BJ (cell line): ENCODE measurements at regions of chr3 and their contacts with region 1.

Region 1: GRCh38 chr3:184371570-184372018 is 6.4 kb downstream of the THPO start:
- DNase-seq: peak; percentile 36
- H3K4me3 ChIP-seq: no peak overlapping the region
- H3K27me3 ChIP-seq: no peaks in the 10 kb centered on the region; the same call in 1 of the 2 replicates
- CTCF ChIP-seq: peak; percentile 99

Region 2: DNA sequence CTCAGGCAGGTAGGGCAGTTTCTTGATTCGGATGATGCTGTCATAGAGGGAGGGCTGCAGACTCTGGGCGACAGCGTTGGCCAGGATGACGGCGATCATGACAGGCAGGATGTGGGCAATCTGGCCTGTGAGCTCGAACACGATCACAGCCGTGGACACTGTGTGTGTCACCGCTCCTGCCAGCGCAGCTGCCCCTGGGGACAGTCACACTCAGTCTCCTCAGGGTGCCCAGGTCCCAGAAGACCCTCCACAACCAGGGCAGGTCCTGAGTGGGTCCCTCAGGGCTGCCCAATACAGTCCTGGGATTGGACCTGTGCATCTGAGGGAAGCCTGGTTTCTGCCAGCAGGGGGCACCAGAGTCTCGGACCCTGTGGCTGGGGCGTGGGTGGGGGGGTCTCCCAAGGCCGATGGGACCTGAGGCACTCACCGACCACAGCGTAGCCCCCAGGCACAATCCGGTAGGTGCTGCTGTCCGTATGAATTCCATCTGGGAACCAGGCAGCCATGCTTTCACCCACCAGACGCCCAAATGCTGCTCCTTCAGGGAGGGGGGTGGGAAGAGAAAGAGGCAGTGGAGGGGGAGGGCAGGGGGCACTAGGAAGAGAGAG is 17.4 kb before region 1 on chr3:
- CTCF ChIA-PET with region 1: interaction called, 12 read pairs
- POLR2A ChIA-PET with region 1: no interaction called
- DNase-seq: no peak
- H3K4me3 ChIP-seq: no peak overlapping the region
- H3K27me3 ChIP-seq: no peaks in the 10 kb centered on the region
- CTCF ChIP-seq: peak; percentile 88

Region 3: DNA sequence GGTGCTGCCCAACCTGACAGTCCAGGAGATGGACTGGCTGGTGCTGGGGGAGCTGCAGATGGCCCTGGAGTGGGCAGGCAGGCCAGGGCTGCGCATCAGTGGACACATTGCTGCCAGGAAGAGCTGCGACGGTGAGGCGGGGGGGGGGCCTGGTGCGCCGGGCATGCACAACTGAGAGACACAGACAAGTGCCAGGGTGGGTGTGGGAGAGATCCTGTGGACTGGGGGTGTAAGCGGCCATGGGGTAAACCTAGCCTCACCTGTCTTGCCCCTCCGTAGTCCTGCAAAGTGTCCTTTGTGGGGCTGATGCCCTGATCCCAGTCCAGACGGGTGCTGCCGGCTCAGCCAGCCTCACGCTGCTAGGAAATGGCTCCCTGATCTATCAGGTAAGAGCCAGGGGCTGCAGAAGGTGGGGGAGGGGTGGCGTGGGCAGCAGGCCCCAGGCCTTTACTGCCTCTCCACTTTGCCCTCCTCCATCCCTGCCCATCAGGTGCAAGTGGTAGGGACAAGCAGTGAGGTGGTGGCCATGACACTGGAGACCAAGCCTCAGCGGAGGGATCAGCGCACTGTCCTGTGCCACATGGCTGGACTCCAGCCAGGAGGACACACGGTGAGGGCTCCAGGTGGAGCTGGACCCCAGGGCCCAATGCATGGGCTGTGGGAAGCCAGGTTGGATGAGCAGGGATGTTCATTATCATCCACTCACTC is 11.6 kb after region 1 on chr3:
- CTCF ChIA-PET with region 1: interaction called, 10 read pairs
- POLR2A ChIA-PET with region 1: interaction called, 5 read pairs
- DNase-seq: no peak
- H3K4me3 ChIP-seq: no peak overlapping the region
- H3K27me3 ChIP-seq: peaks cover 21% of the 10 kb centered on the region
- CTCF ChIP-seq: no peak

Region 4: GRCh38 chr3:184417619-184418327 is 46.2 kb after region 1 on chr3:
- CTCF ChIA-PET with region 1: interaction called, 17 read pairs
- POLR2A ChIA-PET with region 1: no interaction called
- DNase-seq: no peak
- H3K4me3 ChIP-seq: no peak overlapping the region
- H3K27me3 ChIP-seq: no peaks in the 10 kb centered on the region
- CTCF ChIP-seq: peak; percentile 95

Region 5: DNA sequence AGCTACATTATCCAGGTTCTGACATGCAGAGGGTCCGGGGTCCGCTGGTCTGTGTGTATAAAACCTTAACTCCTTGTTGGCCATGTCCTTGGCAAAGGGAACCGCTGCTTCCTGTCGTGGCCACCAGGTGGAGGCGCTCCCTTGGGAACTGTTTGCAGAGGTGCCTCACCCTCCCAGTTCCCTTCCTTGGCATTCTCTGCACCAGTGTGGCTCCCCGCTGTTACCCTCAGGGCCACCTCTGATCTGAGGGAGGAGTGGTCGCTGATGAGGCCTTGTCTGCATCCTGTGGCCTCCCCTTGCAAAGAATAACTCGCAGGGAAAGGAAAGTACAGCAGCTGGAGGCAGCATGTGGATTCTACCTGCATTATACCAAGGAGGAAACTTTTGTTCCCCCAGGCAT is 97.8 kb after region 1 on chr3:
- CTCF ChIA-PET with region 1: interaction called, 44 read pairs
- POLR2A ChIA-PET with region 1: no interaction called
- DNase-seq: no peak
- H3K4me3 ChIP-seq: no peak overlapping the region
- H3K27me3 ChIP-seq: peaks cover 2% of the 10 kb centered on the region; the same call in 1 of the 2 replicates
- CTCF ChIP-seq: peak; percentile 69

Region 6: DNA sequence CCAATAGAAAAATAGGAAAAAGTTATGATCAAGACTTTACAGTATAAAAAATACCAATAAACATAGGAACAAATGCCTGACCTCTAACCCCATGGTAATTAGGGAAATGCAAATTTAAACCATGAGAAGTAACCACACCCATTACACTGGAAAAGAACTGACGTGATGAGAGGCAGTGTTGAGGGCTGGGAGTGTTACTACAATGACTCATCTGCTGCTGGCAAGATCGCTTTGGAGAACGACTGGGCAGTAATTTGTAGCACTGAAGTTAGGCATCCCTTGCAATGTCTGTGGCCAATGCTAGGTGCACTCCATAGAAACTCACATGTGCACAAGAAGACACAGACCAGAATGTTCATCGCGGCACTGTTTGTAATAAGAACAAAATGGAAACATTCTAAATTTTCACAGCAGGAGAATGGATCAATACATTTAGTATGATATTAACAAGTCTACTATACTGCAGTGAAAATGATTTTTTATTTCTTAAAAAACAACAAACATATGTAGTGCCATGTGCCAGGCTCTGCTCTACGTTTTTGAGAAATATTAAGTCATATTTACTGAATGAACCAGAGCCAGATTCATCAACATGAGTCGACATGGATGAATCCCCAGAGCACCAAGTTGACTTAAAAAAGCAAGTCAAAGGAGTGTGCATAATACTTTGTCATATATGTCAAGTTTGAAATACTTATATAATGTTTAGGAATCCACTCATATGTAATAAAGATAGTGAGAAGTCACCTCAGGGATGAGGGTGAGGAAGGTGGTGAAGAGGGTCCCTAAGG is 152.4 kb after region 1 on chr3:
- CTCF ChIA-PET with region 1: interaction called, 14 read pairs
- POLR2A ChIA-PET with region 1: no interaction called
- DNase-seq: no peak
- H3K4me3 ChIP-seq: no peak overlapping the region
- H3K27me3 ChIP-seq: peaks cover 10% of the 10 kb centered on the region
- CTCF ChIP-seq: no peak

Region 7: DNA sequence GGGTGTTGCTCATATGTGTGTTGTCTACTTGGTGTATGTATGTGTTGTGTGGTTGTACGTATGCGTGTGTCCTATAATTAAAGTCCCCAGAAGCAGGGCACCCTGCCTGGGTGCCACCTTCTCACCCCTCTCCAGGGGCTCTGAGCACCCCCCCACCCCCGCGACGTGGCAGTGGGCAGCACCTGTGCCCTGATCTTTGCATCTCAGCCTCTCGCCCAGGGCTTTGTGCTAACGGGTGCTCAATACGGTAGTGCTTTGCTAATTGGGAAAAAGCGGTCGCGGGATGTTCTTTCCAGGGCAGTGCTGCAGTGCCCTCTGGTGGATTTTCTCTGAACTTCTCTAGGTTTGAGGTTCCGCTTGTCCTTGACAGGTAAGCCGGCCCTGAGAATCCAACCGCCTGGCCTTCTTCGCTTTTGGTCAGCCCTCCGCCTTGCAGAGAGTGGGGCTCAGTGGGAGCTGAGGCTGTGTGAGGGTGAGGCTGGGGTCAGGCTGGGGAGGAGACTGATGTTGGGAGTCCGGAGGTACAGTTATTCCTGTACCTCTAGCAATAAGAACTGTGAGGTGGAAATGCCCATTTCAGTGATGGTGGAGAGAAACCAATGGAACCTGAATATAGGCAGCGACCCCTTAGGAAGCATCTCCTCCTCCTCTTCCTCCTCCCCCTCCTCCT is 172.4 kb after region 1 on chr3:
- CTCF ChIA-PET with region 1: interaction called, 195 read pairs
- POLR2A ChIA-PET with region 1: no interaction called
- DNase-seq: no peak
- H3K4me3 ChIP-seq: no peak overlapping the region
- H3K27me3 ChIP-seq: peaks cover 11% of the 10 kb centered on the region
- CTCF ChIP-seq: peak; percentile 80